K562 (cell line): ENCODE measurements at regions of chr12 and their contacts with region 1.

Region 1: GRCh38 chr12:54279866-54280467 is at the start of gene CBX5:
- DNase-seq: peak; percentile 97 to 99 (median 98)
- ATAC-seq: peak; percentile 50
- H3K4me3 ChIP-seq: peak within 1 kb of the TSS; percentile 71
- H3K27ac ChIP-seq: peak within 1 kb of the TSS; percentile 99
- H3K4me1 ChIP-seq: peaks cover 8 to 14% of the 10 kb centered on the region in 2 experiments; a peak in 3 of 5 replicates
- H3K27me3 ChIP-seq: no peaks in the 10 kb centered on the region
- CTCF ChIP-seq: no peak
- EP300 ChIP-seq: no peak
- POLR2A ChIP-seq: peak; percentile 86
- RAD21 ChIP-seq: no peak; a peak in 1 of 4 replicates
- polyA plus RNA-seq, gene CBX5: 49.8 to 53.2 TPM

Region 2: GRCh38 chr12:54259194-54260011 is 20.6 kb before region 1 on chr12:
- CTCF ChIA-PET with region 1: no interaction called
- POLR2A ChIA-PET with region 1: interaction called, 58 read pairs
- in situ Hi-C with region 1: no loop called
- intact Hi-C with region 1: loop called (anchors 1 kb)
- DNase-seq: peak; percentile 92 to 95 (median 92)
- ATAC-seq: peak; percentile 87
- H3K4me3 ChIP-seq: peak overlapping the region; percentile 38
- H3K27ac ChIP-seq: peak overlapping the region; percentile 79
- H3K4me1 ChIP-seq: peaks cover 27 to 39% of the 10 kb centered on the region in 2 experiments
- H3K27me3 ChIP-seq: no peaks in the 10 kb centered on the region
- CTCF ChIP-seq: no peak
- EP300 ChIP-seq: no peak; the same call in none of the 2 replicates
- POLR2A ChIP-seq: peak; percentile 71
- RAD21 ChIP-seq: no peak

Region 3: DNA sequence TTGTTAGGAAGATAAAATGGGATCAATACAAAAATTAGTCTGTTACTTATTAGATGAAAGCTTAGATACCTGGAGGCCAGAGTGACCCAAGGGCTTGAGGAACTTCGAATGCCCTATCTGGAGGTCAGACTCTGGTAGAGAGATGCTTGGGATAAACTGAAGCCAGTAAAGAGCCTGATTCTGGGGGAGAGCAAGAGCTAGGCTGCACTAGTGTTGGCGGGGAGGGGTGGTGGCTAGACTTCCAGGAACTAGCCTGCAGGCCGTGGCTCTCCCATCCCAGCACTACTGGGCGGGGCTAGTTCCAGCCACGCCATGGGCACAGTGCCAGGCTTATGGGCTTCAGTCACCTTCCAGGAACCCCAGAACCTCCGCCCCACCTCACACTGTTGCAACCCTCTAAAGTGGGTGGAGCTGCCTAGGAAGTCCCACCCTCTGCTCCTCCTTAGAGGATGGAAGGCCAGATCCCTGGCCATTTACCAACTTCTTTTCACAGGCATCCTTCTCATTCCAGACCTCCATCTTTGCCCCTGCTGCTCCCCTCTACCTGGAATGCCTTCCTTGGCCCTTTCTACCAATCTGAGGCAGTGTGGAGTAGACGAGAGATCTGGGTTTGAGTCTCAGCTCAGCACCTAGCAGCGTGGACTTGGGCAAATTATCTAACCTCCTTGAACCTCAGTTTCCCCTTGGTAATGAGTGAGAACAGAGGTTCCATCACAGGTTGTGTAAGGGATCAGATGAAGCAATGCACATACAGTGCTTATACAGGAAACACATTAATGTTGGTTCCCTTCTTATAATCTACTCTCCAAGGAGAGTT is 27.2 kb after region 1 on chr12:
- CTCF ChIA-PET with region 1: no interaction called
- POLR2A ChIA-PET with region 1: interaction called, 20 read pairs
- in situ Hi-C with region 1: no loop called
- intact Hi-C with region 1: no loop called
- DNase-seq: peak; percentile 90 to 100 (median 92)
- ATAC-seq: peak; percentile 83
- H3K4me3 ChIP-seq: no peak overlapping the region
- H3K27ac ChIP-seq: peak overlapping the region; percentile 54
- H3K4me1 ChIP-seq: peaks cover 43 to 49% of the 10 kb centered on the region in 2 experiments
- H3K27me3 ChIP-seq: no peaks in the 10 kb centered on the region
- CTCF ChIP-seq: no peak
- EP300 ChIP-seq: peak; percentile 78
- POLR2A ChIP-seq: peak; percentile 64
- RAD21 ChIP-seq: peak in 1 of 2 experiments; percentile 12; a peak in 1 of 4 replicates

Region 4: DNA sequence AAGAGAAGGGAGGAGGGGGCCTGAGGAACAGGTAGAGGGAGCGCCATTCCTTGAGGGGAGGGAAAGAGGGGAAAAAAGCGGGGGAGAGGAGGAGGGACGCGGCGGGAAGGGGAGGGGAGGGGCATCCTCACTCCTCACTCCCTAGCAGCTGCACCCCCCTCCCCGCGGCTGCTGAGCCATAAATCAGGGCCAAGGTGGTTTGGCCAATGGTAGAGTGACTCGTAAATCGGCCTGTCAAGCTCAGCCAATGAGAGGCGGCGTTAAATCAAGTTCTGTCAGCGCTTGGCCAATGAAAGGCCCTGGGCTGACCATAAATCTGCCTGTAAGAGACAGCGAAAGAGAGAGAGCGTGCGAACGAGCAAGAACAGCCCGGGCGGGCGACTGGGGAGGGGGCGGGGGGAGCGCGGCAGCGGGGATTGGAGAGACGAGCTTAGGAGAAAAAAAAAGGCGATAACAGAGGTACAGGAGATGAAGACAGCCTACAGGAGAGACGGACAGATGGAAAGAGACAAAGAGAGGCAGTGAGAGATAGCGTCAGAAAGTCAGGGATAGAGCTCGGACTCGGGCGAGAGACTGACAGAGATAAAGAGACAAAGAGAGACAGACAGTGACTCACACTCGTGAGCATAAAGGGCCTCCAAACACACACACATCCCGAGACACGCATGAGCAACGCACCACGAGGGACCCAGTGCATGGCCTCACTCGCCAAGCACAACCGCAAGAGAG is 79.2 kb after region 1 on chr12:
- CTCF ChIA-PET with region 1: no interaction called
- POLR2A ChIA-PET with region 1: interaction called, 57 read pairs
- in situ Hi-C with region 1: no loop called
- intact Hi-C with region 1: loop called (anchors 1 kb)
- DNase-seq: peak; percentile 98 to 100 (median 99)
- ATAC-seq: peak; percentile 88
- H3K4me3 ChIP-seq: peak overlapping the region; percentile 53
- H3K27ac ChIP-seq: peak overlapping the region; percentile 90
- H3K4me1 ChIP-seq: peaks cover 34 to 43% of the 10 kb centered on the region in 2 experiments
- H3K27me3 ChIP-seq: no peaks in the 10 kb centered on the region
- CTCF ChIP-seq: peak in 1 of 3 experiments; percentile 2; a peak in 1 of 6 replicates
- EP300 ChIP-seq: peak; percentile 98
- POLR2A ChIP-seq: peak; percentile 70
- RAD21 ChIP-seq: peak in 1 of 2 experiments; percentile 57; a peak in 3 of 4 replicates